Endothelial cell of umbilical vein (primary cell): ENCODE measurements at regions of chr3 and their contacts with region 1.

Region 1: DNA sequence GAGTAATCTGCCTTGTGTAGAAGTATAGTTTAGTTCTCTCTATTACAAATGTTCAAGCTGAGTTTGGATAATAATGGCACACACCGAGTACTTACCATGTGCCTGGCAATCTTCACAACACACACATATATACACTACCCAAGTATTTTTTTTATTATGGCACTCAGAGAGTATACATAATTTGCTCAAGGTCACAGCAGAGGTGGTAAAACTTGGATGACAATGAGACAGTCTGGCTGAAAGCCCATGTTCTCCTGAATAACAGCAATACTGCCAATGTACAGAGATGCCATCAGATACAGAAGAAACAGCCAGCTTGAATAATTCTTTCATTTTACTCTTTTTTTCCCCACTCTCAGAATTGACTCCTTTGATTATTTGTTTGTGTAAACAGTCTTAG is 460.0 kb downstream of the CNTN6 start:
- DNase-seq: no peak
- H3K4me3 ChIP-seq: no peak overlapping the region
- H3K27ac ChIP-seq: no peak overlapping the region
- H3K4me1 ChIP-seq: no peaks in the 10 kb centered on the region
- H3K27me3 ChIP-seq: no peaks in the 10 kb centered on the region
- CTCF ChIP-seq: no peak
- POLR2A ChIP-seq: no peak

Region 2: DNA sequence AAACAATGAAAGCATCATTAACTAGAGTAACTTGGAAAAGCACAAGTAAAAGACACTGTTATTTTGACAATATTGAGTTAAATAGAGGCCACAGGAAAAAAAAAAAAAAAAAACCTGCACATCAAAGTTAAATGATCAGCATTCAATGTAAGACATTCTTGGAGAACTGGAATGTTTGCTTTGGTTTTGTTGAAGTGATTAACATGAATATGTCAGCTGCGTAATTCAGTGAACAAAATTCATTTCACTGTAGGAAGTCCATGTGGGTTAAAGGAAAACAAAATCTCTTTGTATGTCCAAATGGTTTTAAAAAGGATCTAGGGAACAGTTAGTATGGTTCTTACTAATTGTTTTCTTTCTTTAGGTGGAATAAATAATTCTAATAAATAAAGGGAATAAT is 712.9 kb before region 1 on chr3:
- CTCF ChIA-PET with region 1: no interaction called
- POLR2A ChIA-PET with region 1: no interaction called
- dilution Hi-C with region 1: no loop called
- intact Hi-C with region 1: no loop called
- DNase-seq: no peak
- H3K4me3 ChIP-seq: no peak overlapping the region
- H3K27ac ChIP-seq: no peak overlapping the region
- H3K4me1 ChIP-seq: no peaks in the 10 kb centered on the region
- H3K27me3 ChIP-seq: no peaks in the 10 kb centered on the region
- CTCF ChIP-seq: no peak
- POLR2A ChIP-seq: no peak

Region 3: DNA sequence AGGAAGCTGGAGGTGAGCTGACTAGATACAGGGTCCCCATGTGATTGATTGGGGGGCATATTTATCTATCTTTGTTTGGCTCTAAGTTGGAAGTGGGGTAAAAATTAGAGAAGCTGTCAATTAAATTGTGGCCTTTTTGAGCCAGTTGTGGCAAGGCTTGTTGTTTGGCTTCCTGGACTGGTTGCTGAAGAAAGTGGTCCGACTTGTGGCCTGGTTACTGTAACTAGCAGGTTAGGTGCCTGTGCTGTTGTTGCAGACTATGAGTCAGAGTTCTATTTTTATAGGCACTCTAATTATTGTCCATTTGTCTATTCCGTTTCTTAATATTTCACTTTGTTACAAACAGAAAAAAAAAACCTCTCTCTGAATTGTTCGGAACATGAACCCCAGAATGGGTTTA is 589.1 kb before region 1 on chr3:
- CTCF ChIA-PET with region 1: no interaction called
- POLR2A ChIA-PET with region 1: no interaction called
- dilution Hi-C with region 1: no loop called
- intact Hi-C with region 1: no loop called
- DNase-seq: no peak
- H3K4me3 ChIP-seq: no peak overlapping the region
- H3K27ac ChIP-seq: no peak overlapping the region
- H3K4me1 ChIP-seq: no peaks in the 10 kb centered on the region
- H3K27me3 ChIP-seq: no peaks in the 10 kb centered on the region
- CTCF ChIP-seq: no peak
- POLR2A ChIP-seq: no peak

Region 4: GRCh38 chr3:1578131-1578833 is 25.5 kb after region 1 on chr3:
- CTCF ChIA-PET with region 1: no interaction called
- POLR2A ChIA-PET with region 1: no interaction called
- dilution Hi-C with region 1: no loop called
- intact Hi-C with region 1: loop called (anchors 1 kb)
- DNase-seq: no peak
- H3K4me3 ChIP-seq: no peak overlapping the region
- H3K27ac ChIP-seq: no peak overlapping the region
- H3K4me1 ChIP-seq: no peaks in the 10 kb centered on the region
- H3K27me3 ChIP-seq: no peaks in the 10 kb centered on the region
- CTCF ChIP-seq: no peak
- POLR2A ChIP-seq: no peak